ENCODE measurements at regions of chr10 and their contacts with region 1.

Region 1: GRCh38 chr10:84264611-84265141 is 19.8 kb downstream of the RGR start:
- DNase-seq: peak; percentile 84
- ATAC-seq: peak; percentile 95
- H3K4me3 Mint-ChIP-seq: no peak overlapping the region
- H3K27ac Mint-ChIP-seq: no peak overlapping the region
- H3K4me1 Mint-ChIP-seq: peaks cover 13% of the 10 kb centered on the region
- H3K27me3 Mint-ChIP-seq: peaks cover 10% of the 10 kb centered on the region
- CTCF ChIP-seq: peak; percentile 78

Region 2: GRCh38 chr10:84054743-84055142 is 209.9 kb before region 1 on chr10:
- CTCF ChIA-PET with region 1: no interaction called
- POLR2A ChIA-PET with region 1: no interaction called
- DNase-seq: peak; percentile 22
- ATAC-seq: peak; percentile 86
- H3K4me3 Mint-ChIP-seq: no peak overlapping the region
- H3K27ac Mint-ChIP-seq: no peak overlapping the region
- H3K4me1 Mint-ChIP-seq: peaks cover 9% of the 10 kb centered on the region
- H3K27me3 Mint-ChIP-seq: peaks cover 2% of the 10 kb centered on the region
- CTCF ChIP-seq: no peak

Region 3: GRCh38 chr10:84194424-84195040 is 70.1 kb before region 1 on chr10 and contains the start of gene CDHR1:
- CTCF ChIA-PET with region 1: no interaction called
- POLR2A ChIA-PET with region 1: no interaction called
- DNase-seq: peak; percentile 73
- ATAC-seq: peak; percentile 85
- H3K4me3 Mint-ChIP-seq: peak within 1 kb of the TSS; percentile 68
- H3K27ac Mint-ChIP-seq: no peak within 1 kb of the TSS
- H3K4me1 Mint-ChIP-seq: peaks cover 9% of the 10 kb centered on the region; the same call in 1 of the 2 replicates
- H3K27me3 Mint-ChIP-seq: peaks cover 57% of the 10 kb centered on the region
- CTCF ChIP-seq: no peak
- total RNA-seq, gene CDHR1: 5.0 to 7.2 TPM (median 6.4 TPM) in 3 replicates

Region 4: GRCh38 chr10:84237199-84238051 is 27.3 kb before region 1 on chr10:
- CTCF ChIA-PET with region 1: interaction called, 19 read pairs
- POLR2A ChIA-PET with region 1: no interaction called
- DNase-seq: peak; percentile 84
- ATAC-seq: peak; percentile 98
- H3K4me3 Mint-ChIP-seq: no peak overlapping the region
- H3K27ac Mint-ChIP-seq: no peak overlapping the region
- H3K4me1 Mint-ChIP-seq: 0 out of 2 replicates have a peak, but pooled peaks cover 4% of the 10 kb centered on the region
- H3K27me3 Mint-ChIP-seq: peaks cover 27% of the 10 kb centered on the region
- CTCF ChIP-seq: peak; percentile 86

Region 5: GRCh38 chr10:84328418-84329195 is 63.9 kb after region 1 on chr10 and contains the start of gene CCSER2:
- CTCF ChIA-PET with region 1: interaction called, 27 read pairs
- POLR2A ChIA-PET with region 1: interaction called, 4 read pairs
- DNase-seq: peak; percentile 99
- ATAC-seq: peak; percentile 91
- H3K4me3 Mint-ChIP-seq: peak within 1 kb of the TSS; percentile 96
- H3K27ac Mint-ChIP-seq: peak within 1 kb of the TSS; percentile 99
- H3K4me1 Mint-ChIP-seq: peaks cover 37% of the 10 kb centered on the region
- H3K27me3 Mint-ChIP-seq: no peaks in the 10 kb centered on the region
- CTCF ChIP-seq: no peak
- total RNA-seq, gene CCSER2: 21.4 to 30.6 TPM (median 22.7 TPM) in 3 replicates

Region 6: DNA sequence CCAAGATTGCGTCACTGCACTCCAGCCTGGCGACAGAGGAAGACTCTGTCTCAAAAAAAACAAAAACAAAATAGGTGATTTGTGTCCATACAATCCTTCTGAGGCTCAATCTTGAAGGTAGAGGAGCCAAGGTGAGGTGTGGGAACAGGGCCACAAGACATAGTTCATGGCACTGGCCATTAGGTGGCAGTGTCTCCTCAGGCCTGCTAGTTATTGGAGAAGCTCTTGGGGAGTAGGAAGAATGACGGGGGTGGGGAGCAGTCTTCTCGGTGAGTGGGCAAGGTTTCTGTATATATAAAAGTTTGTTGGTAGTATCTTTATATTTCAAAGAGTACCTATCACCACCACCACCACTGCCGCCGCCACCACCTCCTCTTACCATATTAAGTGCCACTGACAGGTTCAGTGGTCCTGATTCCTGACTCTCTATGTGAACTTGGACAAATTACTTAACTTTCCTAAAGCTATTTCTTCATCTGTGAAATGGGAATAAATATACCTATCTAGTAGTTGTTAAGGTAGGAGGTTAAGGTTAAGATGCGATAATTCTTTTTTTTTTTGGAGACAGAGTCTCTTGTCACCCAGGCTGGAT is 87.7 kb after region 1 on chr10:
- CTCF ChIA-PET with region 1: interaction called, 48 read pairs
- POLR2A ChIA-PET with region 1: no interaction called
- DNase-seq: peak; percentile 82
- ATAC-seq: peak; percentile 93
- H3K4me3 Mint-ChIP-seq: no peak overlapping the region
- H3K27ac Mint-ChIP-seq: no peak overlapping the region
- H3K4me1 Mint-ChIP-seq: peaks cover 53% of the 10 kb centered on the region
- H3K27me3 Mint-ChIP-seq: no peaks in the 10 kb centered on the region
- CTCF ChIP-seq: peak; percentile 62; the same call in 1 of the 2 replicates

Region 7: DNA sequence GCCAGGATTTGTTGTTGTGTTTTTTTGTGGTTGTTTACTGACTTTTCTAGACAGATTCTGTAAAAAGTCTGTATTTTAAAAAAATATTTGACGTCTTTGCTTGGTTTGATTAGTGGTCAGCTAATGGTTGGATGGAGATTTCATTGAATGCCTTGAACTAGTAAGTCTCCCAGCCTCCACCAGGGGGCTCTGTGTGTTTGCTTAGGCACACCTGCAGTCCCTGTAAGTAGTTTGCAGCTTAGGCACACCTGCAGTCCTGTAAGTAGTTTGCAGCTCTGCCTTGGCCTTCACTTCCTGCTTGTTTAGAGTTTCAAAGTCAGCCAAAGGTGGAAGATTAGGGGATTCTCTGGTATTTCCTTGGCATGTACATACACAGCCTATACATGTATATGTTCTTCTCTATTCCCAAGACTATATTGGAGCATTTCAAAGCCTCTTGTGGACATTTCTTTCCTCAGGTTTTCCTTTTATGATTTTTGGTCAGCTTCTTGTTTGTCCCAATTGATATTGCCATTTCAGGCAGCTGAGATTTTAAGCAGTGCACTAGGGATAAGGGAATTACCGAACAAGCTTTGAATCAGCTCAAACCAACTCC is 165.3 kb after region 1 on chr10:
- CTCF ChIA-PET with region 1: interaction called, 23 read pairs
- POLR2A ChIA-PET with region 1: no interaction called
- DNase-seq: peak; percentile 89
- ATAC-seq: peak; percentile 99
- H3K4me3 Mint-ChIP-seq: no peak overlapping the region
- H3K27ac Mint-ChIP-seq: peak overlapping the region; percentile 71; the same call in 1 of the 2 replicates
- H3K4me1 Mint-ChIP-seq: peaks cover 7% of the 10 kb centered on the region
- H3K27me3 Mint-ChIP-seq: no peaks in the 10 kb centered on the region
- CTCF ChIP-seq: peak; percentile 72

Region 8: DNA sequence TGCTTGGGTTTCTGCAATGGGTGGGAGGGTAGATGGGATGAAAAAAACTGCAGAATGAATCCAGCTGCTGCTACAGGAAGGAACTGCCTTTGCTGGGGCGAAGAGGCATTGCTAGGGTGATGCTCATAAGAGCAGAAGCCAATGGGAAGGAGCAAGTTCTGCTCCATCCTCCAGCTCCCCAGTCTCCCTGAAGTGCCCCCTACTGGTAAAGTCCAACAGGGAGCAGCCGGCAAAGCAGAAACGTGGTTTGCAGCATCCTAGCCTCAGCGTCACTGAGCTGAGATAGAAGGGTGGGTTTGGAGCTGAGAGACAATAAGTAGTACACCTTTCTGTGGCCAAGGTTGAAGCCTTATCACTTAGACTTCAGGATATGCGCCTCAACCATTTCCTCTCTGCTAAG is 284.2 kb after region 1 on chr10:
- CTCF ChIA-PET with region 1: interaction called, 13 read pairs
- POLR2A ChIA-PET with region 1: no interaction called
- DNase-seq: peak; percentile 66
- ATAC-seq: peak; percentile 90
- H3K4me3 Mint-ChIP-seq: no peak overlapping the region
- H3K27ac Mint-ChIP-seq: no peak overlapping the region
- H3K4me1 Mint-ChIP-seq: no peaks in the 10 kb centered on the region
- H3K27me3 Mint-ChIP-seq: no peaks in the 10 kb centered on the region; the same call in 1 of the 2 replicates
- CTCF ChIP-seq: peak; percentile 44